IMR-90 (cell line): ENCODE measurements at regions of chr1 and their contacts with region 1.

Region 1: DNA sequence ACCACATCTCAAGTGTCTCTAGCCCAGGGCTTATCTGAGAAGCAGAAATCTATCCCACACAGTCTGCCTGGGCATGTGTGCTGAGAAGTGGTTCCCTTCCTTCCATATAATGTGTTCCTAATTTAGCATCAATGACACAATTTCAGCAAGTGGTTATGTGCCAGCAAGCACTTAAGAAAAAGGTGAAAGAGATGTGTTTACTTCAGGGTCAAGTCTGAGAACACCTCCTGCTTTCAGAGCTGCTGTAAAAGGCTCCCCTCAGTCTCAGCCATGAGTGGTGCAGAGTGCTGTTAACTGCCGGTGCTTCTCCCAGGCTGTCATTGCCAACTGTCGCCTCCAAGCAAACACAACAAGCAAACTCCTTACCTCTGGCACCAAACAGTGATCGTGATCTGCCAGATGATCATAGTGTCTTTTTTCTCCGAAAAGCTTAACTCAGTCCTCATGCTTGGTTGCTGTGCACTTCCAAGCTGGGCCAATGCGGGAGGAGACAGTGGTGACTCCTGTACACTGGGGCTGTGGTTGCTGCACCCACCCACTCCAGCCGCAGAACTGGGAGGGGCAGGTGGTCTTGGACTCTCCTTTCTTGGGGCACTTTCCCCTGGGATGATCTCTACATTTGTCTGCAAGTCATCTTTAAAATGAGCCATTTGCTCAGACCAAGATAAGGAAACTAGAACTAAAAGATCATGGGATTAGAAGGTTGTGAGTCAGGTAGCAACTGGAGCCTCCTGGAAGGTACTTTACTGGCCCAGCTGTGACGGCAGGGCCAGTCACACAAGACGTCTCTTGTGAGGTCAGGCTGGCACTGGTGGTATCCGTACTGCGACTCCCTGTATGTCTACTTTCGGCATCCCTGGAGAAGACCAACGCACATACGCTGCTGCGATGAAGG is 32.4 kb downstream of the ATP1A1 start:
- DNase-seq: no peak
- ATAC-seq: no peak
- H3K4me3 ChIP-seq: no peak overlapping the region
- H3K27ac ChIP-seq: no peak overlapping the region
- H3K4me1 ChIP-seq: no peaks in the 10 kb centered on the region
- H3K27me3 ChIP-seq: no peaks in the 10 kb centered on the region
- CTCF ChIP-seq: no peak
- POLR2A ChIP-seq: no peak
- RAD21 ChIP-seq: no peak

Region 2: DNA sequence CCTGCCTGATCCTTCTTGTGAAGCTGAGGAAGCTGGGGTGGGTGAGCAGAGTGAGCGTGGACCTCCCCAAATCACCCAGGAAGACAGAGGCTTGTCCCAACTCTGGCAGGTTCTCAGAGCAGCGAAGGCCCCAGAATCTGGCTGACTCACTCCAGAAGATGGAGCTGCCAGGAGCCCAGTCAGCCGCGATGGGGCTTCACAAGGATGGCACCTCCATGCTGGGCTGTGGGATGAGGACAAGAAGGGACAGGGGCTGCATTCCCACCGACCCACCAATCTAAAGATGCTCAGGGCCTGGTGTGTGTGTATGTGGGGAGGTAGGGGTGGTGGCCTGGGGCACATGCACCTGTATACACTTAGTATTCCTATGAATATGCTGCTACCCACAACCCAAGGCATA is 20.5 kb after region 1 on chr1:
- CTCF ChIA-PET with region 1: no interaction called
- POLR2A ChIA-PET with region 1: no interaction called
- dilution Hi-C with region 1: no loop called
- in situ Hi-C with region 1: no loop called
- intact Hi-C with region 1: loop called (anchors 2 kb)
- DNase-seq: no peak
- ATAC-seq: no peak
- H3K4me3 ChIP-seq: no peak overlapping the region
- H3K27ac ChIP-seq: no peak overlapping the region
- H3K4me1 ChIP-seq: no peaks in the 10 kb centered on the region
- H3K27me3 ChIP-seq: peaks cover 15% of the 10 kb centered on the region
- CTCF ChIP-seq: no peak
- POLR2A ChIP-seq: no peak
- RAD21 ChIP-seq: no peak